ENCODE measurements at regions of chr17 and their contacts with region 1.

Region 1: GRCh38 chr17:82098072-82098821 is at the start of gene FASN:
- DNase-seq: peak; percentile 94
- H3K4me3 Mint-ChIP-seq: peak within 1 kb of the TSS; percentile 75
- H3K27ac Mint-ChIP-seq: peak within 1 kb of the TSS; percentile 63
- H3K4me1 Mint-ChIP-seq: peaks cover 14% of the 10 kb centered on the region
- H3K27me3 Mint-ChIP-seq: no peaks in the 10 kb centered on the region
- total RNA-seq, gene FASN: 183 to 195 TPM

Region 2: GRCh38 chr17:81794509-81794908 is 303.7 kb before region 1 on chr17:
- CTCF ChIA-PET with region 1: no interaction called
- intact Hi-C with region 1: no loop called
- DNase-seq: no peak
- H3K4me3 Mint-ChIP-seq: no peak overlapping the region
- H3K27ac Mint-ChIP-seq: no peak overlapping the region
- H3K4me1 Mint-ChIP-seq: no peaks in the 10 kb centered on the region
- H3K27me3 Mint-ChIP-seq: no peaks in the 10 kb centered on the region

Region 3: DNA sequence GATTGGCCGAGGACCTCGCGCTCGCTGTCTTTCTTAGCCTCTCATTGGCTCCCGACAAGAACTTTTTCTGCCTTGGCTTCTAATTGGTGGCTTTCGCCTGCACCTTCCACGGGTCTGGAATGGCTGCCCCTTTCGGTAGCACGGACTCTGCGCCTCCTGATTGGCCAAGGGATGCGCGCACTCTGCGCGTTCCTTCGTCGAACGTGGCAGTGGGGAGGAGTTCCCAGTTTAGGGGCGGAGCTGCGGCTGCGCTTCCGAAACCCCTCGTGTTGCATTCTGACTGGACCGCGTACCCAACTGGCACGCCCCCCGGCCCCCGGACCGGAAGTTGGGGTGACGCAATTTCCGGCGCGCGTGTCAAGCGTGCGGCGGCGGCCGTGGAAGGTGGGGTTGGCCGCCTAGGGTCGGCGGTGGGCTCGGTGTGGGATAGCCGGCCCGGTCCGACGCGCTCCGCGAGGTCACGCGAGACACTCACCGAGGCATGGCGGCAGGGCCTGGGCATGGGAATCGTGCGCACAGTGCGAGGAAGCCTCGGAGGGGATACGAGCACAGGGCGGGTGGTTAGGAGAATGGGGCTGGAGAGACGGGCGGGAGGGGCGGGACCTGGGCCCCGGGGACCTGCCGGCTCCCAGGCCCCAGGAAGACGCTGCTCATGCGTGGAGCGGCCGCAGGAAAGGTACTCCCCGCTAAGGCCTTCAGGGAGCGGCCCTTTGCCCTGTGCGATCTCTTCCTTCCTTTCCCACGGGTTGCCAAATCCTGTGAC is 237.3 kb before region 1 on chr17:
- CTCF ChIA-PET with region 1: no interaction called
- intact Hi-C with region 1: loop called (anchors 1 kb)
- DNase-seq: peak; percentile 99
- H3K4me3 Mint-ChIP-seq: peak overlapping the region; percentile 93
- H3K27ac Mint-ChIP-seq: peak overlapping the region; percentile 88
- H3K4me1 Mint-ChIP-seq: peaks cover 50% of the 10 kb centered on the region
- H3K27me3 Mint-ChIP-seq: no peaks in the 10 kb centered on the region

Region 4: GRCh38 chr17:81917565-81918332 is 180.5 kb before region 1 on chr17 and contains the start of gene SIRT7:
- CTCF ChIA-PET with region 1: no interaction called
- intact Hi-C with region 1: no loop called
- DNase-seq: peak; percentile 82
- H3K4me3 Mint-ChIP-seq: peak within 1 kb of the TSS; percentile 90
- H3K27ac Mint-ChIP-seq: peak within 1 kb of the TSS; percentile 41
- H3K4me1 Mint-ChIP-seq: peaks cover 31% of the 10 kb centered on the region
- H3K27me3 Mint-ChIP-seq: no peaks in the 10 kb centered on the region
- total RNA-seq, gene SIRT7: 18.8 to 22.1 TPM

Region 5: GRCh38 chr17:82022981-82023374 is 75.3 kb before region 1 on chr17 and contains the start of gene LRRC45:
- CTCF ChIA-PET with region 1: no interaction called
- intact Hi-C with region 1: loop called (anchors 1 kb)
- DNase-seq: peak; percentile 100
- H3K4me3 Mint-ChIP-seq: peak within 1 kb of the TSS; percentile 86
- H3K27ac Mint-ChIP-seq: no peak within 1 kb of the TSS
- H3K4me1 Mint-ChIP-seq: peaks cover 22% of the 10 kb centered on the region
- H3K27me3 Mint-ChIP-seq: no peaks in the 10 kb centered on the region
- total RNA-seq, gene LRRC45: 12.0 to 12.5 TPM

Region 6: DNA sequence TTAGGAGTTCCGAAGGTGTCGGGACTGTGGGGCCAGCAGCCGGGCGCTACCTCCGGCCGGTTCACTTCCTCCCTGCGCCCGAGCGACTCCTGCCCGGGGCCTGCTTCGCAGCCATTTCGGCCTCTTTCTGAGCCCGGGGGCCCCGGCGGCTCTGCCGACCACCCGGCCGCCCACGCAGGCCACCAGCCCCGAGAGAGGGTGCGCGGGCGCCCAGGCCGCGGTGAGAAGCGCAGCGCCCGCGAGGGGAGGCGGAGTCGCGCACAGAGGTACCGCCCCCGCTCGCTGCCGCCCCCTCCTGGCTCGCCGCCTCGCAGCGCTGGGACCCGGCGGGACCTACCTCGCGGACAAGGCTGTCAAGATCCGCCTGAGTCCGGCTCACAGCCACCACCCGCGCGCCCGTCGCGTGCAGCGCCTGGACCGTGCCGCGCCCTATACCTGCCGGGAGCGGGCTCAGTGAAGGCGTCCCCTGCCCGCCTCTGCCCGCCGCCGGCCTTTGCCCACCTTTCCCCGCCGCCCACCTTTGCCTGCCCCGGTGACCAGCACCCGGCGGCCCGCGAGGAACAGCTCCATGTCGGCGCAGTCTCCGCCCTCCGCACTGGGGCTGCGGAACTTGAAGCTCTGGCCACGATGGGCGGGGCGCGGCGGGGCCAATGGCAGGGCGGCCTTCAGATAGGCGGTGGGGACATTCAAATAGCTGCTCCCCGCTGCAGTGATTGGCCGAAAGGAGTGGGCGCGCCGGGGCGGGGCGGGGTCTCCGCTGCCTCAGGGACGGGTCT is 60.9 kb before region 1 on chr17 and contains the start of gene DCXR:
- CTCF ChIA-PET with region 1: no interaction called
- intact Hi-C with region 1: loop called (anchors 1 kb)
- DNase-seq: peak; percentile 96
- H3K4me3 Mint-ChIP-seq: peak within 1 kb of the TSS; percentile 85
- H3K27ac Mint-ChIP-seq: peak within 1 kb of the TSS; percentile 82
- H3K4me1 Mint-ChIP-seq: peaks cover 22% of the 10 kb centered on the region
- H3K27me3 Mint-ChIP-seq: no peaks in the 10 kb centered on the region
- total RNA-seq, gene DCXR: 139 to 146 TPM

Region 7: GRCh38 chr17:82120148-82120547 is 21.9 kb after region 1 on chr17:
- CTCF ChIA-PET with region 1: interaction called, 4 read pairs
- intact Hi-C with region 1: loop called (anchors 1 kb)
- DNase-seq: peak; percentile 68
- H3K4me3 Mint-ChIP-seq: peak overlapping the region; percentile 46
- H3K27ac Mint-ChIP-seq: peak overlapping the region; percentile 90
- H3K4me1 Mint-ChIP-seq: peaks cover 47% of the 10 kb centered on the region
- H3K27me3 Mint-ChIP-seq: no peaks in the 10 kb centered on the region

Region 8: DNA sequence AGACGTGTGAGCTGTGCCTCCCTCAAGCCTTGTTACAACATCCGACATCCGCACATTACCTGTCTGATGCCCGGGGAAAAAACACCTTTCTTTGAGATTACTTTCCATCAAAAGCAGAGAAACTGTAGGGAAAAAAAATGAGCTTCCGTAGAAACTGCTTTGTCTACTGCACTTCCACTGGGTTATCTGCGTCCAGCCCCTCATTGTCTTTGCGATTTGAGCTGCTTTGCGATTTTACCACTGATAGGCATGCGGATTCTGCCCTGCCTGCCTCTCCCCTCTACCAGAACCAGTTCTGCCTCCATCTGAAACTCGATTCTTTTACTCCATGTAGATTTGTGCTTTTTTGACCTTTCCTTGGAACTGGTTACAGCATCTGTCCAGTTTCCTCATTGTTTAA is 43.5 kb after region 1 on chr17:
- CTCF ChIA-PET with region 1: no interaction called
- intact Hi-C with region 1: no loop called
- DNase-seq: no peak
- H3K4me3 Mint-ChIP-seq: no peak overlapping the region
- H3K27ac Mint-ChIP-seq: no peak overlapping the region
- H3K4me1 Mint-ChIP-seq: no peaks in the 10 kb centered on the region
- H3K27me3 Mint-ChIP-seq: no peaks in the 10 kb centered on the region

Region 9: GRCh38 chr17:82153745-82154375 is 55.6 kb after region 1 on chr17:
- CTCF ChIA-PET with region 1: no interaction called
- intact Hi-C with region 1: loop called (anchors 2 kb)
- DNase-seq: peak; percentile 88
- H3K4me3 Mint-ChIP-seq: no peak overlapping the region
- H3K27ac Mint-ChIP-seq: no peak overlapping the region
- H3K4me1 Mint-ChIP-seq: peaks cover 7% of the 10 kb centered on the region
- H3K27me3 Mint-ChIP-seq: no peaks in the 10 kb centered on the region